Calu3 (cell line): ENCODE measurements at regions of chr7 and their contacts with region 1.

Region 1: DNA sequence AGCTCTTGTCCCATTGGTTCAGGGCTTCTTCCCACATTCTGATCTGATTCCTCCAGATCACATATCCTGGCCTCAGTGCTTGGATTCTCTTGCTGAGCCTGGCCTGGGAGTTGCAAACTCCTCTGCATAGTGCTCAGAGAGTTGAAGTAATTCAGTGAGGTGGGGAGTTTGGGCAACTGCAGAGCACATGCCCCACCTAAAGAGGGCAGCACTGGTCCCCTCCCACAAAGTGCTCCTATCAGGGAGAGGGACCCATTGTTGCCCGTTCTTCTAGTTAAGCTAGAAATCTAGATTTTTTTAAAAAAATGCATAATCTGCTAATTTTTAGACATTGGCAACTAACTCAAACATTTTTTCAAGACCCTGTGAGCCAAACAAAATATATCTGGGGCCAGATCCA is 45.1 kb downstream of the CHN2 start:
- DNase-seq: peak; percentile 67
- H3K4me3 Mint-ChIP-seq: no peak overlapping the region
- H3K27ac Mint-ChIP-seq: no peak overlapping the region
- H3K4me1 Mint-ChIP-seq: no peaks in the 10 kb centered on the region
- H3K27me3 Mint-ChIP-seq: no peaks in the 10 kb centered on the region
- CTCF ChIP-seq: peak; percentile 89

Region 2: DNA sequence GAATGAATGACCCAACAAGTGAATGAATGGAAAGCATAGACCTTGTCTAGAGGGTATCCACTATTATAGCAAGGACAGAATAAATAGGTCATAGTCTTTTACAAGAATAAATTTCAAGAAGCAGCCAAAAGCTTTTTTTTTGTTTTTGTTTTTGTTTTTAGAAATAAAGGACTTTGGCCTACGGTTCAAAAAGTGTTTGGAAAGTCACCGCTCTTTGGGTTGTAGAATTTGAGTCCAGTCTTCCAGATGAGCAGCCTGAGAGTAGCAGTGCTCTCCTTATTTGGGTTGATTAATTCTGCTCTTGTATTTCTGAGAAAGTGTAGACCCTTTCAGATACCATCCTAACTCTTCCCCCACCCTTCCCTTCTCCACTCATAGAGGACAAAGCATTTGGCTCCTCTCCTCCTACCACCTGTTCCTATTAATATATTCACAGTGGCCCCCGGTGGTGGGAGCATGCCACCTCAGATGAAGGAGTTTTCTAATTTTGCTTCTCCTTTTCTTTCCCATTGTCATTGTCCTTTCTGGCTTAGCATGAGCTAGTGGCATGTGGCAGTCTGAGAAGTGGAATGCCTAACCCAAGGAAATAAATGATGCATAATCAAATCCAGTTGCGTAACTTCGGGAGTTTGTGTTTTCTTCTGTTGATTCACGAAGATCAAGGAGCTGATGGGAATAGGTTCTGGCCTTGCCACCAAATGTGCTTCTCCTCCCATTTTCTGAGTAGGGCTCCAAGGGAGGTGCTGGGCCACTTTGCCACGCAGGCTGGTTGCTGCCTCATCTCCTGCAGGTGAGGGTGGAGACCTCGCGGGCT is 69.6 kb after region 1 on chr7:
- CTCF ChIA-PET with region 1: interaction called, 3 read pairs
- intact Hi-C with region 1: loop called (anchors 5 kb)
- DNase-seq: peak; percentile 35
- H3K4me3 Mint-ChIP-seq: no peak overlapping the region
- H3K27ac Mint-ChIP-seq: no peak overlapping the region
- H3K4me1 Mint-ChIP-seq: no peaks in the 10 kb centered on the region
- H3K27me3 Mint-ChIP-seq: peaks cover 44% of the 10 kb centered on the region
- CTCF ChIP-seq: peak; percentile 43

Region 3: GRCh38 chr7:29345600-29345999 is 106.0 kb after region 1 on chr7:
- CTCF ChIA-PET with region 1: interaction called, 12 read pairs
- intact Hi-C with region 1: loop called (anchors 1 kb)
- DNase-seq: peak; percentile 81
- H3K4me3 Mint-ChIP-seq: no peak overlapping the region
- H3K27ac Mint-ChIP-seq: no peak overlapping the region
- H3K4me1 Mint-ChIP-seq: no peaks in the 10 kb centered on the region
- H3K27me3 Mint-ChIP-seq: no peaks in the 10 kb centered on the region
- CTCF ChIP-seq: no peak

Region 4: GRCh38 chr7:29397398-29397797 is 157.8 kb after region 1 on chr7:
- CTCF ChIA-PET with region 1: interaction called, 13 read pairs
- intact Hi-C with region 1: no loop called
- DNase-seq: no peak
- H3K4me3 Mint-ChIP-seq: no peak overlapping the region
- H3K27ac Mint-ChIP-seq: no peak overlapping the region
- H3K4me1 Mint-ChIP-seq: no peaks in the 10 kb centered on the region
- H3K27me3 Mint-ChIP-seq: no peaks in the 10 kb centered on the region
- CTCF ChIP-seq: no peak

Region 5: GRCh38 chr7:29408841-29409243 is 169.2 kb after region 1 on chr7:
- CTCF ChIA-PET with region 1: interaction called, 3 read pairs
- intact Hi-C with region 1: loop called (anchors 2 kb)
- DNase-seq: peak; percentile 79
- H3K4me3 Mint-ChIP-seq: no peak overlapping the region
- H3K27ac Mint-ChIP-seq: no peak overlapping the region
- H3K4me1 Mint-ChIP-seq: peaks cover 13% of the 10 kb centered on the region
- H3K27me3 Mint-ChIP-seq: no peaks in the 10 kb centered on the region
- CTCF ChIP-seq: peak; percentile 89

Region 6: DNA sequence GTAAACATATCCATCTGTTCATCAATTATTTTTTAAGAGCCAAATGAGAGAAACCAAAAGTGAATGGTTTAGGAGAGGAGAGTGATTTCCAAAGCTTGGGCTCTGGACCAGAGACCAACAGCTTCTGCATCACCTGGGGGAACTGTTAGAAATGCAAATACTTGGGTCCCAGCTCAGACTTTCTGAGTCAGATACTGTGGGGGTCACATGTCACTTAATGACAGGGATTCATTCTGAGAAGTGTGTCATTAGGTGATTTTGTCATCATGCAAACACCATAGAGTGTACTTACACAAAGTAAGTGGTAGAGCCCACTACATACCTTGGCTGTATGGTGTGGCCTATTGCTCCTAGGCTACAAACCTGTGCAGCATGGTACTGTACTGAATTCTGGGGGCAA is 195.5 kb after region 1 on chr7:
- CTCF ChIA-PET with region 1: no interaction called
- intact Hi-C with region 1: no loop called
- DNase-seq: no peak
- H3K4me3 Mint-ChIP-seq: no peak overlapping the region
- H3K27ac Mint-ChIP-seq: no peak overlapping the region
- H3K4me1 Mint-ChIP-seq: no peaks in the 10 kb centered on the region
- H3K27me3 Mint-ChIP-seq: no peaks in the 10 kb centered on the region
- CTCF ChIP-seq: no peak